Activated naive CD4-positive, alpha-beta T cell treated with anti-CD3 and anti-CD28 coated beads for 36 hours (primary cell): ENCODE measurements at regions of chrX and their contacts with region 1.

Region 1: DNA sequence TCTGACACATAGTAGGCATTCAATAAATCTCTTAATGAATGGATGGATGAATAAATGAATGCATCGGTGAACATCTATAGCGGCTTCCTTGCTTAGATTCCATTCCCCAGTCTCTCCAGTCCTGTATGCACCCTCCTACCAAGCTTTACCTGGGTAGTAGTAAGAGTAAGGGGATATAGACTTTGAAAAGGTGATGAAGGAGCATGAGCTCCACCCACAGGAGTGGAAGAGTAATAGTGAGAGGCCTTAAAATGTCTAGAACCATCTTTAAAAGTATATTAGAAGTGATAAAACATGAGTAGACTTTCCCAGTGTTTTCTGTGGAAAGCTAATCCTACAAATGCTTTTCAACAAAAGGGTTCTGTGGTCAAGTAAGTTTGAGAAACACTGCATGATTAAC is 35.5 kb upstream of the GPC3 start:
- DNase-seq: no peak
- H3K4me3 Mint-ChIP-seq: no peak overlapping the region
- H3K27ac Mint-ChIP-seq: no peak overlapping the region
- H3K4me1 Mint-ChIP-seq: no peaks in the 10 kb centered on the region
- H3K27me3 Mint-ChIP-seq: no peaks in the 10 kb centered on the region

Region 2: DNA sequence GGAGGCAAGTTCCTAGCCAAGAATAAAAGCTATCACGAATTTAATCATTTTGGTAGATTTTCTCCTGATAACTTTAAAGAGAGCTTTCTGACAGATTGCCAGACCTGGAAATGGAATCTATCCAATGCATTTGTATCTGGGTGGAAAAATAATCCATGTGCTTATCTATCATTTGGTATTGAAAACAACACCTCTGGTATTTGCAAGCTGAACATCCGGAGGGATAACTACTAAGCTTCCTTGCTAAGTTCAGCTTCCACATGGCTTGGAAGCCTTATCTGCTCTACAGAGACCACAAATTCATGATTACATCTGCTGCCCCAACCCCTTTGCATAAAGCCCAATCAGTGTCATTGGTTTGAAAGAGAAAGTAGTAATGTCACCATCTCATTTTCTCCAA is 266.3 kb before region 1 on chrX:
- CTCF ChIA-PET with region 1: no interaction called
- intact Hi-C with region 1: no loop called
- DNase-seq: no peak
- H3K4me3 Mint-ChIP-seq: no peak overlapping the region
- H3K27ac Mint-ChIP-seq: no peak overlapping the region
- H3K4me1 Mint-ChIP-seq: peaks cover 9% of the 10 kb centered on the region
- H3K27me3 Mint-ChIP-seq: no peaks in the 10 kb centered on the region

Region 3: DNA sequence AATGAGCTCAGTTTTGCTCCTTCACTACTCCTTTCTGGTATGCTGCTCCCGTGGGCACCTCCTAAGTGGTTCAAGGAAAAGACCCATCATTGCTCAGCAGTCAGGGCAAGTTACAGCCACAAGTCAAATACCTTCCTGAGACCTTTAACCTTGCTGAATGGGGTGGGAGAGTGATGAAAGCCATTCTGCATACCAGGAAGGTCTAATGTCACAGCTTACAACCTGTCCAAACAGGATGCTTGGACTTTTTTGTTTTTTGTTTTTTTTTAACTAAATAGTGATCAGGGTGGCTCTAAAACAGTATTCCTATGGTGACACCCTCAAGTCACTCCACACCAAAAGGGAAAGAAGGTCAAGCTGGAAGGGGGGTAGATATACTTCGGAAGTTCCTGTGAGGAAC is 128.6 kb before region 1 on chrX:
- CTCF ChIA-PET with region 1: no interaction called
- intact Hi-C with region 1: no loop called
- DNase-seq: no peak
- H3K4me3 Mint-ChIP-seq: no peak overlapping the region
- H3K27ac Mint-ChIP-seq: no peak overlapping the region
- H3K4me1 Mint-ChIP-seq: no peaks in the 10 kb centered on the region
- H3K27me3 Mint-ChIP-seq: no peaks in the 10 kb centered on the region

Region 4: DNA sequence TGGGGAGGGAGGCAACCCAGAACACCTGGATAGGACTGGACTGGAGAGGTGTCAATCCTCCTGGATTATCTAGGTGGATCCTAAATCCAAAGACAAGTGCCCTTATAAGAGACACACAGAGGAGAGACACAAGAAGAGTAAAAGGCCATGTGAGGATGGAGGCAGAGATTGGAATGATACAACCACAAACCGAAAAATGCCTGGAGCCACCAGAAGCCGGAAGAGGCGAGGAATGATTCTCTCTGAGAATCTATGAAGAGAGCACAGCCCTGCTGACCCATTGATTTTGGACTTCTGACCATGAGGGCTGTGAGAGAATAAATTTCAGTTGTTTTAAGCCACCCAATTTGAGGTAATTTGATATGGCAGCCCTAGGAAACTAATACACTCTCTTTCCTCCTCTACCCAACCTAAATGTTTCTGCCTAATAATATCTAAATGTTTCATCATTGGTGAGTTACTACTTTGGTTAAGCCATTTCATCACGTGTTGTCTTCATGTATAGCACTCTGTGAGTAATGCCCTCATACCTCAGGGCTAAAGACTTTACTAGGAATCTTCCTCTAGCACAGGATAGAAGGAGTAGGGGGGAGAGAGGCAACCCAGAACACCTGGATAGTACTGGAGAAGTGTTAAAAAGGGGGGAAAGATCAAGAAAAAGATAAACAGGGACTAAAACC is 55.5 kb before region 1 on chrX:
- CTCF ChIA-PET with region 1: no interaction called
- intact Hi-C with region 1: loop called (anchors 5 kb)
- DNase-seq: no peak
- H3K4me3 Mint-ChIP-seq: no peak overlapping the region
- H3K27ac Mint-ChIP-seq: no peak overlapping the region
- H3K4me1 Mint-ChIP-seq: peaks cover 8% of the 10 kb centered on the region
- H3K27me3 Mint-ChIP-seq: no peaks in the 10 kb centered on the region

Region 5: GRCh38 chrX:134484039-134484438 is 463.1 kb after region 1 on chrX:
- CTCF ChIA-PET with region 1: no interaction called
- intact Hi-C with region 1: no loop called
- DNase-seq: no peak
- H3K4me3 Mint-ChIP-seq: no peak overlapping the region
- H3K27ac Mint-ChIP-seq: no peak overlapping the region
- H3K4me1 Mint-ChIP-seq: peaks cover 3% of the 10 kb centered on the region
- H3K27me3 Mint-ChIP-seq: no peaks in the 10 kb centered on the region